ENCODE measurements at regions of chr6 and their contacts with region 1.

Region 1: GRCh38 chr6:156741287-156742073 is 35.7 kb upstream of the ARID1B start:
- DNase-seq: no peak
- H3K4me3 Mint-ChIP-seq: peak overlapping the region; percentile 9
- H3K27ac Mint-ChIP-seq: peak overlapping the region; percentile 89
- H3K4me1 Mint-ChIP-seq: peaks cover 5% of the 10 kb centered on the region
- H3K27me3 Mint-ChIP-seq: peaks cover 2% of the 10 kb centered on the region

Region 2: GRCh38 chr6:156449128-156449527 is 292.4 kb before region 1 on chr6:
- CTCF ChIA-PET with region 1: no interaction called
- intact Hi-C with region 1: no loop called
- DNase-seq: no peak
- H3K4me3 Mint-ChIP-seq: no peak overlapping the region
- H3K27ac Mint-ChIP-seq: no peak overlapping the region
- H3K4me1 Mint-ChIP-seq: no peaks in the 10 kb centered on the region
- H3K27me3 Mint-ChIP-seq: no peaks in the 10 kb centered on the region

Region 3: GRCh38 chr6:156686995-156687788 is 54.3 kb before region 1 on chr6:
- CTCF ChIA-PET with region 1: no interaction called
- intact Hi-C with region 1: loop called (anchors 1 kb)
- DNase-seq: peak; percentile 63
- H3K4me3 Mint-ChIP-seq: peak overlapping the region; percentile 82
- H3K27ac Mint-ChIP-seq: peak overlapping the region; percentile 91
- H3K4me1 Mint-ChIP-seq: peaks cover 32% of the 10 kb centered on the region
- H3K27me3 Mint-ChIP-seq: no peaks in the 10 kb centered on the region

Region 4: DNA sequence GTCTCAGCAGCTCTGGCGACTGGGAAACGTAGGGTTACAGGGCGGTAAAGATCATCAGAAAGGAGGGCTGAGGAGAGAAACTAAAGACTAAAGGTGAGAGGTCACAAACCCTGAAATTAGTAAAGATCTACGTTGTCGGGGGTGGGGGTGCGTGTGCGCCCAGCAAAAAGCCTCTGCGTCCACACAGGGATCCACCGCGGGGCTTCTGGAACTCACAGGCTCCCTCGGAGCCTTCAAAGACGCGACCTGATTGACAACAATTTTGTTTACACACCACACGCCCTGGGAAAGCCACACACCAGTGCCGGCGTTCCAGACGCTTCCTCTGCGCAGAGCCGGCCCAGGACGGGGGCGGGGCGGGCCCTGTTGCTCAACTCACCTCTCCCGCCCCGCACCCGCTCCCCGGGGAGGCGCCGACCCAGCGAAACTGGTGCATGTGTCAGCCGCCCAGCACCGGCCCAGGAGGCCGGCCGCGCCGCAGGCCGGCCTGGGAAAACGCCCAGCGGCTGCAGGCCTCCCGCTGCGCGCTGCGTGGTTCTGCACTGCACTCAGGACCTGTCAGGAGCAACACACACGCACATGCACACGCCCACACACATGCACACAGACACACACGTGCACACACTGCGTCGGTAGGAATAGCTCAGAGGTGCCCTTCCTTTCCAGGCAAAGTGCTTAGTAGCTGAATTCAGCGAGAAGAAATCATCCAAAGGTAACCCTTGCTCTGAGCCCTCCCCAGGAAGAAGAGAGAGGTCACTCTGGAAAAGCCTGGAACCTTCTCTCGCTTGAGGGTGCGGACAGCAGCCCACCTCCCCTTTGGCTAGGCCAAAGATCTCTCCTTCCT is 21.5 kb before region 1 on chr6:
- CTCF ChIA-PET with region 1: no interaction called
- intact Hi-C with region 1: loop called (anchors 1 kb)
- DNase-seq: peak; percentile 73
- H3K4me3 Mint-ChIP-seq: peak overlapping the region; percentile 70
- H3K27ac Mint-ChIP-seq: peak overlapping the region; percentile 24
- H3K4me1 Mint-ChIP-seq: peaks cover 16% of the 10 kb centered on the region
- H3K27me3 Mint-ChIP-seq: no peaks in the 10 kb centered on the region

Region 5: DNA sequence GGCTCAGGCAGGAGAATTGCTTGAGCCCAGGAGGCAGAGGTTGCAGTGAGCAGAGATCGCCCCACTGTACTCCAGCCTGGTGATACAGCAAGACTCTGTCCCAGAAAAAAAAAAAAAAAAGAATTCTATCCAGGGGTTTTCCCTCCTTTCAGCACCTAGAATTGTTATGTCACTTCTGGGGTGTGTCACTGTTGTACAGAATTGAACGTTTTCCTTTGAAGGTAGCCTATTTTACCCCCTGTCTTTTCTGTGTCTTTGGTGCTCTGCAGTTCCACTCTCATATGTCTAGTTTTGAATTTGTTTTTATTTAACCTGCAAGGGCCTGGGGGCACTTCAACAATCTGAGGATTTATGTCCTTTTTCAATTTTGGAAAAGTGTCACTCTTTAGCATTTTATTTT is 16.4 kb after region 1 on chr6:
- CTCF ChIA-PET with region 1: no interaction called
- intact Hi-C with region 1: loop called (anchors 1 kb)
- DNase-seq: no peak
- H3K4me3 Mint-ChIP-seq: no peak overlapping the region
- H3K27ac Mint-ChIP-seq: no peak overlapping the region
- H3K4me1 Mint-ChIP-seq: peaks cover 2% of the 10 kb centered on the region
- H3K27me3 Mint-ChIP-seq: no peaks in the 10 kb centered on the region

Region 6: GRCh38 chr6:156980333-156980914 is 238.9 kb after region 1 on chr6:
- CTCF ChIA-PET with region 1: no interaction called
- intact Hi-C with region 1: no loop called
- DNase-seq: no peak
- H3K4me3 Mint-ChIP-seq: no peak overlapping the region
- H3K27ac Mint-ChIP-seq: no peak overlapping the region
- H3K4me1 Mint-ChIP-seq: peaks cover 88% of the 10 kb centered on the region
- H3K27me3 Mint-ChIP-seq: no peaks in the 10 kb centered on the region

Measured in activated naive CD4-positive, alpha-beta T cell treated with anti-CD3 and anti-CD28 coated beads for 36 hours (primary cell).